Activated T-helper 2 cell treated with anti-CD3 and anti-CD28 coated beads, Interferon-gamma antibody, Interleukin-2, Interleukin-4, amounts not matched to agents 10 μg/mL and 5 μg/mL and 100 μg/mL, durations not matched to agents 14 hours and 24 hours and 36 hours (primary cell): ENCODE measurements at regions of chr5 and their contacts with region 1.

Region 1: DNA sequence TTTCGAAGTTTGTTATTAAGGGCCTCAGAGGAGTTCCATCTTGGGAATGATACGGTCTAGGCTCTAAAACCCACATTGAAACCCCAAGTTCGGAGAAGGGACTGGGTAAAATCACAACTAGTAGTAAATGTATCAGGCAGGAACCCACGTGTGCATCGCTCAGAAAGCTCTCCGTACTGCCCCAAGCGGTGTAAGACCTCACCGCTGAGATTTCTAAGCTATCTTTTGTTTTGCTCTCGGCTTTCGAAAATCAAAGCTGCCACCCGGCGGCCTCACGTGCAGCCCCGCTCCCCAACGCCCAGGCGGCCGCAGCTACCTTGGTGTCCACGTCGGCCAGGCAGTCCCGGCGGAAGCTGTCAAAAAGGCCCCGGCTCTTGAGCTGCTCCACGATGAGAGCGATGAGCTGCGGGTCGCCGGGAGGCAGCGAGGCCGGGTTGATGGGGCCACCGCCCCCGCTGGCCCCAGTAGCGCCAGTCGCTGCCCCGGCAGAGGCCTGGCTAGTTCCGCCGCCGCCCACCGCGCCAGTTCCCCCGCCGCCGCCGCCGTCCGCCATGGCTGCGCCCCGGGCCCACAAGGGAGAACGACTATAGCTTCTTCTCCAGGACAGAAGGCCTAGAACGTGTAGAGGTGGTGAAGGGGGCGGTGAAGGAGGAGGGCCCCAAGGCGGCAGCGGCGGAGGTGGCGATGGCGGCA is 420 bp downstream of the BOD1 start:
- DNase-seq: peak; percentile 61
- H3K4me3 Mint-ChIP-seq: peak overlapping the region; percentile 90
- H3K27ac Mint-ChIP-seq: peak overlapping the region; percentile 88
- H3K4me1 Mint-ChIP-seq: peaks cover 31% of the 10 kb centered on the region
- H3K27me3 Mint-ChIP-seq: no peaks in the 10 kb centered on the region

Region 2: GRCh38 chr5:173637340-173637739 is 21.3 kb after region 1 on chr5:
- intact Hi-C with region 1: loop called (anchors 1 kb)
- DNase-seq: no peak
- H3K4me3 Mint-ChIP-seq: no peak overlapping the region
- H3K27ac Mint-ChIP-seq: peak overlapping the region; percentile 48
- H3K4me1 Mint-ChIP-seq: peaks cover 10% of the 10 kb centered on the region
- H3K27me3 Mint-ChIP-seq: peaks cover 3% of the 10 kb centered on the region

Region 3: GRCh38 chr5:173917788-173918786 is 302.1 kb after region 1 on chr5:
- intact Hi-C with region 1: loop called (anchors 1 kb)
- DNase-seq: peak; percentile 34
- H3K4me3 Mint-ChIP-seq: no peak overlapping the region
- H3K27ac Mint-ChIP-seq: no peak overlapping the region
- H3K4me1 Mint-ChIP-seq: peaks cover 5% of the 10 kb centered on the region
- H3K27me3 Mint-ChIP-seq: no peaks in the 10 kb centered on the region

Region 4: GRCh38 chr5:173972925-173973615 is 357.0 kb after region 1 on chr5:
- intact Hi-C with region 1: loop called (anchors 1 kb)
- DNase-seq: peak; percentile 58
- H3K4me3 Mint-ChIP-seq: peak overlapping the region; percentile 71
- H3K27ac Mint-ChIP-seq: no peak overlapping the region
- H3K4me1 Mint-ChIP-seq: peaks cover 7% of the 10 kb centered on the region
- H3K27me3 Mint-ChIP-seq: peaks cover 26% of the 10 kb centered on the region

Region 5: GRCh38 chr5:175517818-175518450 is 1901.9 kb after region 1 on chr5:
- intact Hi-C with region 1: loop called (anchors 2 kb)
- DNase-seq: peak; percentile 71
- H3K4me3 Mint-ChIP-seq: peak overlapping the region; percentile 67
- H3K27ac Mint-ChIP-seq: peak overlapping the region; percentile 98
- H3K4me1 Mint-ChIP-seq: peaks cover 63% of the 10 kb centered on the region
- H3K27me3 Mint-ChIP-seq: no peaks in the 10 kb centered on the region